Activated naive CD4-positive, alpha-beta T cell treated with anti-CD3 and anti-CD28 coated beads for 36 hours (primary cell): ENCODE measurements at regions of chr3 and their contacts with region 1.

Region 1: GRCh38 chr3:107589454-107589853 is 66.7 kb downstream of the BBX start:
- DNase-seq: no peak
- H3K4me3 Mint-ChIP-seq: no peak overlapping the region
- H3K27ac Mint-ChIP-seq: no peak overlapping the region
- H3K4me1 Mint-ChIP-seq: peaks cover 29% of the 10 kb centered on the region
- H3K27me3 Mint-ChIP-seq: no peaks in the 10 kb centered on the region

Region 2: DNA sequence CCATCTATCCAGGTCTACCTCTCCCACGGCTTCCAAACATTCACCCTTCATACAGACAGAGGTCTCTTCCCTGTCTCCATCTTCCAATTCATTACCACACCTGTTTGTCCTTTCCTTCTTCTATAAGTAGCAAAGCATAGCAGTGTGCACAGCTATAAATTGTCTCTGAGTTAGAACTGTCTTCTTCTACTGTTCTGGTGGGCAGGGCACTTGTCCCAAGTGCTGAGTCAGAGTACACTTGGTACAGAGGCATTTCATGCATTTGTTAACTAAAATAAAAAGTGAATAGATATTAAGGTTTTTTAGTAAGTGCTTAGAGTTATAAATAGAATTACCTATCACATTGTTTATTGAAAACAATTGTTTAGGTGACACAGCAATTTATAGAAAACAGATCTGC is 362.4 kb before region 1 on chr3:
- CTCF ChIA-PET with region 1: no interaction called
- intact Hi-C with region 1: loop called (anchors 1 kb)
- DNase-seq: no peak
- H3K4me3 Mint-ChIP-seq: no peak overlapping the region
- H3K27ac Mint-ChIP-seq: no peak overlapping the region
- H3K4me1 Mint-ChIP-seq: no peaks in the 10 kb centered on the region
- H3K27me3 Mint-ChIP-seq: peaks cover 2% of the 10 kb centered on the region

Region 3: DNA sequence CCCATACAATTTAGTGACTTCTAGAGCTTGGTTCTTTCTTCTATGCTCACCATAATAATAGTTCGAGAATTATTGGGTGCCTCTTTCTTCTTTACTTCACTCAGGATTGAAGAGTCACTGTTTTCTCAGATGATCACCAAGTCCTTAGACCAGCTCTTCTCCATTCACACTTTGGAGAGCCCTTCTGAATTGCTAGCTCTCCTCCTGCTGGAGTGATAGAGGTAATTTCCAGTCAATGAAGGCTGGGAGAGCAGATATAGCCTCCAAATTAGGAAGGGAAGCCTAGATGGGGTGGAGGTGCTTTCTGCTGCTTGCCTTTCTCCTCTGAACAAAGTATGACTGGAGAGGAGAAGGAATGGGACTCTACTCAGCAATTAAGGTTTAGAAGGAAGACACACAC is 77.3 kb before region 1 on chr3:
- CTCF ChIA-PET with region 1: interaction called, 10 read pairs
- intact Hi-C with region 1: no loop called
- DNase-seq: no peak
- H3K4me3 Mint-ChIP-seq: no peak overlapping the region
- H3K27ac Mint-ChIP-seq: no peak overlapping the region
- H3K4me1 Mint-ChIP-seq: no peaks in the 10 kb centered on the region
- H3K27me3 Mint-ChIP-seq: peaks cover 11% of the 10 kb centered on the region